AG04450 (cell line): ENCODE measurements at regions of chr2 and their contacts with region 1.

Region 1: GRCh38 chr2:165015052-165015642 is 59.8 kb upstream of the SLC38A11 start:
- DNase-seq: peak; percentile 34
- H3K4me3 ChIP-seq: no peak overlapping the region
- H3K27ac ChIP-seq: no peak overlapping the region
- H3K27me3 ChIP-seq: no peaks in the 10 kb centered on the region
- CTCF ChIP-seq: peak; percentile 96

Region 2: DNA sequence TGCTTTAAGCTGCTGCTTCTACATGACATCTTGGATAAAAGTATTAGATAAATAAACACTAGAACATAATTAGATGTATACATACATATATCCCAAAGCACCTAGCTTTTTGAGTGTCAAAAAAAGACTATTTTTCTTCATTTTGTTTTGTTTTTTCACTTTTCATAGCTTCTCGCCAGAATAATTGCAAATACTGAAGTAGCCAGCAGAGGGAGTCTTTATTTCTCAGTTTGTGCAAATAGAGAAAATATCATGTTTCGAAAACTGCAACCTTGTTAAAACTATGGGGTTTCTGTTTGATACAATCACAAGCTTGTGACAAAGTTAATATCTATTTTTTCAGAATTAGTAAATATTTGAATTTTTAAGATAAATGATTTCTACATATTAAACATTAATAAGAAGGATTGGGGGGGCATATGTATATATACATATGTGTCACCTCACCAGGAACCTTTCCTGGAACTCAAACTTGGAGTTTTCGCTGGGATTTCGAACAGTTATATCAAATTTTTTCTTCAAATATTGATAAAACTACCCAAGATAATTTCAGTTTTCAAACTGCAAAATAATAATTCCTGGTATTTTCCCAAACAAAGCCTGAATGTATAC is 454.9 kb before region 1 on chr2:
- CTCF ChIA-PET with region 1: no interaction called
- POLR2A ChIA-PET with region 1: no interaction called
- DNase-seq: no peak
- H3K4me3 ChIP-seq: no peak overlapping the region
- H3K27ac ChIP-seq: no peak overlapping the region
- H3K27me3 ChIP-seq: no peaks in the 10 kb centered on the region
- CTCF ChIP-seq: peak; percentile 78

Region 3: GRCh38 chr2:164737612-164738081 is 277.5 kb before region 1 on chr2:
- CTCF ChIA-PET with region 1: interaction called, 10 read pairs
- POLR2A ChIA-PET with region 1: no interaction called
- DNase-seq: peak; percentile 23
- H3K4me3 ChIP-seq: no peak overlapping the region
- H3K27ac ChIP-seq: no peak overlapping the region
- H3K27me3 ChIP-seq: no peaks in the 10 kb centered on the region
- CTCF ChIP-seq: peak; percentile 79

Region 4: DNA sequence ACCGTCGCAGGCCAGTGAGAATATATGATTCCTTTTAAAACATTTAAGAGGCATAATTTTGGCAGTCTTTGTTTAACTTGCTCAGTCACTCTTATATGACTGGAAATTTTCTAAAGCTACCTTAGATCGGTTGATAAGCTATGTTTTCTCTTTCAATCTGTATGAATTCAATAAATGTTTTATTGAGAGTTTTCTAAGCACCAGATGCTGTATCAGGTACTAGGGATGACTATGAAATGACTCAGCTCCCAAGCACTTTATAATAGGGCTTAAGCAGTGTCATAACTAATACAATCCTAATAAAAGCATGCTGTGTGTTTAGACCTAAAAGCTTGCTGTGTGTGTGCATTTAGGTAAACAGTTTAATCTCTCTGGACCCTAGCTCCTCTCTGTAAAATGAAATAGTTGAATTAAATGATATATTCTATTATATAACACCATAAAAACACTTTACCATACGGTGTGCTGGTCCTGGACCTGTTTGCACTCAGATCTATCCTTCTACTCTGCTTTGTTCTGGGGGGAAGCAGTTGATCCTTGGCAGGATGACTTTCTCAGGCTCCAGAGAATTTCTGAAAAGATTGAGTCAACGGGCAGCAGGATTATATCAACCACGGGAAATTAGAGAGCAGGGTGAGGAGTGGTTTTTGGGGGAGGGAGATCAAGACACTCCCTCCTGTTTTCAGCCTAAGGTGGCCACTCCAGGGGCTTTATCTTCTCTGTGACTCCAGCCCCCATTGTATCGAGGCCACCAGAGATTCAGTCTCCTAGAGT is 33.7 kb before region 1 on chr2:
- CTCF ChIA-PET with region 1: interaction called, 11 read pairs
- POLR2A ChIA-PET with region 1: no interaction called
- DNase-seq: no peak
- H3K4me3 ChIP-seq: no peak overlapping the region
- H3K27ac ChIP-seq: peak overlapping the region; percentile 73
- H3K27me3 ChIP-seq: no peaks in the 10 kb centered on the region
- CTCF ChIP-seq: no peak

Region 5: GRCh38 chr2:164992818-164993217 is 22.3 kb before region 1 on chr2:
- CTCF ChIA-PET with region 1: interaction called, 47 read pairs
- POLR2A ChIA-PET with region 1: interaction called, 4 read pairs
- DNase-seq: peak; percentile 61
- H3K4me3 ChIP-seq: no peak overlapping the region
- H3K27ac ChIP-seq: no peak overlapping the region
- H3K27me3 ChIP-seq: no peaks in the 10 kb centered on the region
- CTCF ChIP-seq: peak; percentile 49

Region 6: GRCh38 chr2:165003433-165004130 is 11.6 kb before region 1 on chr2:
- CTCF ChIA-PET with region 1: interaction called, 14 read pairs
- POLR2A ChIA-PET with region 1: no interaction called
- DNase-seq: no peak
- H3K4me3 ChIP-seq: no peak overlapping the region
- H3K27ac ChIP-seq: no peak overlapping the region
- H3K27me3 ChIP-seq: no peaks in the 10 kb centered on the region
- CTCF ChIP-seq: no peak

Region 7: GRCh38 chr2:165032559-165032958 is 17.4 kb after region 1 on chr2:
- CTCF ChIA-PET with region 1: interaction called, 12 read pairs
- POLR2A ChIA-PET with region 1: no interaction called
- DNase-seq: no peak
- H3K4me3 ChIP-seq: no peak overlapping the region
- H3K27ac ChIP-seq: no peak overlapping the region
- H3K27me3 ChIP-seq: no peaks in the 10 kb centered on the region
- CTCF ChIP-seq: no peak

Region 8: DNA sequence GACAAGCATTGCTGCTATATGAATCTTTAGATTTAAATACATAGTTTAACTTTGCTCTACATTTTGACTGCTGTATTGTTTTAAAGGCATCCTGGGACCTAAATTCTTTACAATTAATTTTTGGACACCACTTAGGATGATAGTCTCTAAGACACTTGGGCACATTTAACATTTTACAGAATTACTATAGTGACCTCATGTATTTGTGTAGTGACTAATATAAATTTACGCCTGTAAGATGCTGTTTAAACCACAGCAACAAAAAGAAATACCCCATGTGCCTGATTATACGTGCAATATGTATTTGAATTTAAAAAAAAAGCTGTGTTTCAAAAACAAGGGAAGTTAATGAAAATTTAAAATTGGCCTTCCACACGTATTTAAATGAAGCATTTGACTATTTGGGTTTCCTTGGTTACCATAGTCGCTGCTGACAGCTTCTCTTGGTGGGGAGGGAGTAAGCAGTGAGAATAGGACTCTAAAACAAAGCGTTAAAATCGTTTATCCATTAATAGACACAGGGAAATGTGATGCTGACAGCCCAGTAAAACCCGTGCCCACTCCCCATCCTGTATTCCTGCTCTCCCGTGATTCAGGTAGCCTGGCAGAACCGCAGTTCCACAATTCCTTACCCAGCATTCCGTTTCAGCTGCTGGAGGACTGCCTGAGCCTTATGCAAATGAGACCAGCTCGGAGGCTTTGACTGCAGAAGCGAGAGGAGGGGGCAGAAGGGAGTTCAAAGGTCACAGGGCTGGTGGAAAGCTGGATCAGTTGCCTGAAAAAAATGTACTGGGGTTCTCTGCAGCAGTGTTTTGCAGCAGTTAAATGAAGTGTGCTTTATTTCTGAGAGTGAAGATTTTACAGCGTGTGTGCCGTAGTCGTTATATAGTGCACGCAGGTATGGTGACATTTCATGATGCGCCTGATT is 558.7 kb after region 1 on chr2:
- CTCF ChIA-PET with region 1: no interaction called
- POLR2A ChIA-PET with region 1: no interaction called
- DNase-seq: no peak
- H3K4me3 ChIP-seq: peak overlapping the region; percentile 22
- H3K27ac ChIP-seq: no peak overlapping the region
- H3K27me3 ChIP-seq: no peaks in the 10 kb centered on the region
- CTCF ChIP-seq: no peak